CD8-positive, alpha-beta T cell (primary cell): ENCODE measurements at regions of chr6 and their contacts with region 1.

Region 1: GRCh38 chr6:144411332-144412190 is 126.4 kb downstream of the UTRN start:
- DNase-seq: peak in 2 of 9 experiments; percentile 5 to 17
- ATAC-seq: peak; percentile 69
- H3K4me3 ChIP-seq: no peak overlapping the region
- H3K4me3 Mint-ChIP-seq: peak overlapping the region; percentile 72
- H3K27ac ChIP-seq: no peak overlapping the region
- H3K27ac Mint-ChIP-seq: peak overlapping the region; percentile 87
- H3K4me1 ChIP-seq: peaks cover 12% of the 10 kb centered on the region
- H3K4me1 Mint-ChIP-seq: peaks cover 75% of the 10 kb centered on the region
- H3K27me3 ChIP-seq: no peaks in the 10 kb centered on the region
- H3K27me3 Mint-ChIP-seq: no peaks in the 10 kb centered on the region
- CTCF ChIP-seq: no peak

Region 2: DNA sequence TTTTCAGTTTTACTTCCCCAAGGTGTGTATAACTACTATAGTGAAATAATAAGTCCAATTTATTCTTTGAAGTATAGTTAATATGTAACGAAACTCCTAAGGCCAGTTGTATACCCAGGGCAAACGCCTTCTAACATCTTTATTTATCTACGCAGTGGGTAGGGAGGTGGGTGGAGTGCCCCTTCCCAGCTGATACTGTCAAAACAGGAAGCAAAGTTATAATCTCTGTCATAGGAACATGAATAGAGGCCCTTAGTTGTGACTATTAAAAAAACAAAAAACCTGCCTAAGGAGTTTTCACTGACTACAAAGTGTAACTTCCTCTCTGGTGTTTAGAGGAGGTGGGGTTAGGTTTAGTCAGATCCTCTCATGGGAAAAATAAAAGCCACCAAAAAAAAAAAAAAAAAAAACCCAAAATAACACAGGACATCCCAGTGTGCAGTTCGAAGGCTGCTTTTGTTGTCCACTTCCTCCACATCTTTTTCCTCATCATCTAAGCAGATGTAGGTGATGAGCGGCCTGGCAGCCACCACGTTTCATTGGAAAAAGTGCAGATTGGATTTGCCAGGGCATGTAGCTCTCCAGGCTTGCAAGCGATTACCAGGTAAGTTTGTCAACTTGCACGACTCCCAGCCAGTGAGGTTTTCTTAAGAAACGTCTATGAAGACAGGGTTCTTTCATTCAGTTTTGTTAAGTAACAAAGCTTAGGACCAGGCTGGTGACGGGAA is 67.7 kb before region 1 on chr6:
- CTCF ChIA-PET with region 1: no interaction called
- POLR2A ChIA-PET with region 1: no interaction called
- intact Hi-C with region 1: loop called in 1 of 2 experiments (anchors 5 kb)
- DNase-seq: peak in 6 of 9 experiments; percentile 45 to 89 (median 66)
- ATAC-seq: peak; percentile 73
- H3K4me3 ChIP-seq: peak overlapping the region; percentile 54 to 65
- H3K4me3 Mint-ChIP-seq: peak overlapping the region; percentile 98
- H3K27ac ChIP-seq: peak overlapping the region; percentile 64 to 84
- H3K27ac Mint-ChIP-seq: peak overlapping the region; percentile 100
- H3K4me1 ChIP-seq: peaks cover 49% of the 10 kb centered on the region
- H3K4me1 Mint-ChIP-seq: peaks cover 76% of the 10 kb centered on the region
- H3K27me3 ChIP-seq: no peaks in the 10 kb centered on the region
- H3K27me3 Mint-ChIP-seq: no peaks in the 10 kb centered on the region
- CTCF ChIP-seq: no peak

Region 3: DNA sequence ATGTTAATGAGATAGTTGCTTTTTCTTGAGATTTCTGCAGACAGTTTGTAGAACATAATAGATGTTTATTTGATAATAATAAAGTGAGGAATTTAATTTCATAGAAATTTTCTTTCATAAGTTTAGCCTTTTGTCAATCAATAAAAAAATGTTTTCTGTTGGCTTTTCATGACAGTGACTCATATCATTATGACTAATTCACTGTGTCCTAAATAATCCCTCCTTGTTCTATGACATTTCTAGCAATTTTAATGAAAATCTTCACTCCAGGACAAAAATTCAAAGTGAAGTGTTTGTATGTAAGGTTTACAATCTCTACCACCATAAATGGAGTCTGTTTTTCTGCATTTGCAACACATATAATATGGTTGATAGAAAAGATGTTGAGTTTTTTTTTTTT is 16.5 kb before region 1 on chr6:
- CTCF ChIA-PET with region 1: no interaction called
- POLR2A ChIA-PET with region 1: no interaction called
- intact Hi-C with region 1: loop called in 1 of 2 experiments (anchors 2 kb)
- DNase-seq: no peak
- ATAC-seq: no peak
- H3K4me3 ChIP-seq: no peak overlapping the region
- H3K4me3 Mint-ChIP-seq: no peak overlapping the region
- H3K27ac ChIP-seq: no peak overlapping the region
- H3K27ac Mint-ChIP-seq: no peak overlapping the region
- H3K4me1 ChIP-seq: peaks cover 13% of the 10 kb centered on the region
- H3K4me1 Mint-ChIP-seq: peaks cover 58% of the 10 kb centered on the region
- H3K27me3 ChIP-seq: no peaks in the 10 kb centered on the region
- H3K27me3 Mint-ChIP-seq: no peaks in the 10 kb centered on the region
- CTCF ChIP-seq: no peak

Region 4: GRCh38 chr6:144423167-144423566 is 11.6 kb after region 1 on chr6:
- CTCF ChIA-PET with region 1: no interaction called
- POLR2A ChIA-PET with region 1: no interaction called
- intact Hi-C with region 1: no loop called
- DNase-seq: no peak
- ATAC-seq: no peak
- H3K4me3 ChIP-seq: no peak overlapping the region
- H3K4me3 Mint-ChIP-seq: no peak overlapping the region
- H3K27ac ChIP-seq: no peak overlapping the region
- H3K27ac Mint-ChIP-seq: no peak overlapping the region
- H3K4me1 ChIP-seq: peaks cover 10% of the 10 kb centered on the region
- H3K4me1 Mint-ChIP-seq: peaks cover 27% of the 10 kb centered on the region
- H3K27me3 ChIP-seq: no peaks in the 10 kb centered on the region
- H3K27me3 Mint-ChIP-seq: no peaks in the 10 kb centered on the region
- CTCF ChIP-seq: no peak